ENCODE measurements at regions of chr12 and their contacts with region 1.

Region 1: DNA sequence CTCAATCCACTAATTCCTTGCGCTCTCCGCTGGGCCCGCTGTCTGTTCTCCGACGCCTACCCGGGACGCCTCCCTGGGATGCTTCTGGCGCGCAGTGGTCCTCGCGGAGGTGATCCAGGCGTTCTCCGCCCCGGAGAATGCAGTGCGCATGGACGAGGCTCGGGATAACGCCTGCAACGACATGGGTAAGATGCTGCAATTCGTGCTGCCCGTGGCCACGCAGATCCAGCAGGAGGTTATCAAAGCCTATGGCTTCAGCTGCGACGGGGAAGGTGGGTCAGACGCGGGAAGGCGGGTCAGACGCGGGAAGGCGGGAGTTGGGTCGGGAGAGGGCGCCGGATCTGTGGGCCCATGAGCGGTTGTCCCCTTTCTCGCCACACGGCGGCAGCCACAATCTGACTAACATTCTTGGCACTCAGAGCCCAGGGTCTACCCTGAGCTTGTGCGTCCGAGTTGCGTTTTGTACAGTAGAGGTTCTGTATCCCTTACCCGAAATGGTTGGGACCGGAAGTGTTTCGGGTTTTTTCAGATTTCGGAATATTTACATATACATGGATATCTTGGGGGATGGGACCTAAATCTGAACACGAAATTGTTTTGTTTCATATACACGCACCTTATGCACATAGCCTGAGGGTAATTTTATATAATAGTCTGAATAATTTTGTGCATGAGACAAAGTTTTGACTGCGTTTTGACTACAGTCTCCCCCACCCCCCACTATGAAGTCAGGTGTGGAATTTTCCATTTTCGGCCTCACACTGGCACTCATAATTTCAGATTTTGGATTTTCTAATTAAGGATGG is 762 bp downstream of the C12orf57 start:
- DNase-seq: peak; percentile 95

Region 2: DNA sequence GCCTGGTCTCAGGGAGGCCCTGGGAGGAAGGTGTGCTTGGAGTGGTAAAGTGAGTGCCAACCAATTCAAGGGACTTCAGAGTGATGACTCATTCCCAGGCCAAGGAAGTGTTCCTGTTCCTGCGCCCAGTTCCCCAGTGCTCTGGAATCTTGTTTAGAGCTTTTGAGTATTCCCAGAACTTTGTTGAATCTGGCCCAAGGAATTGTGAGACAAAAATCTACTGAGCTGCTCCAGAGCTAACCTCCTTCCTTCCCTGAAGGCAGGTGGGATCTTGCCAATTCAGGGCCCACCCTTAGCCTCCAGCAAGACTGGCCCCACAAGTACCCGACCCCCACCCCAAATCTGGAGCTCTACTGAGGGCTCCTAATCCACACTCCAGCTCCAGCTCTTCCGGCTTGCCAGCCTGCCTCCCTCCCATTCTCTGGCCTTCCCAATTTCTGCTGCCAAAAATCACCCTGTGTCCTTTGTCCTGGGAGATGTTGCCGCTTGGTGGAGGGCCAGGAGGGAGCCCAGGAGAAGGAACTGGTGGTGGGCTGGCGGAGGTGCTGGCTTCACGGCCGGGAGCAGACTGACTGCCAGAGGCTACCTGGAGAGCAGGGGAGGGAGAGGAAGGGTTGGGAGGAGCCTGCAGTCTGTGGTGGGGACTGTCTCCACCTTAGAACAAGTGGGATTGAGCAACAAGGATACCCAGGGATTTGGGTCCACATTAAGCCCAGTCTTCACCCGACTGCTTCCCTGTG is 18.9 kb before region 1 on chr12:
- intact Hi-C with region 1: loop called (anchors 2 kb)
- DNase-seq: peak; percentile 81

Region 3: GRCh38 chr12:7042842-7043241 is 98.3 kb after region 1 on chr12:
- intact Hi-C with region 1: loop called (anchors 5 kb)
- DNase-seq: no peak

Region 4: GRCh38 chr12:7108796-7109571 is 164.4 kb after region 1 on chr12 and contains the start of gene C1RL:
- intact Hi-C with region 1: loop called (anchors 1 kb)
- DNase-seq: peak; percentile 94
- total RNA-seq, gene C1RL: 10.5 TPM